Mammary epithelial cell (primary cell): ENCODE measurements at regions of chr6 and their contacts with region 1.

Region 1: GRCh38 chr6:134363318-134364039 is 45.6 kb upstream of the SGK1 start:
- DNase-seq: peak; percentile 98
- H3K4me3 ChIP-seq: no peak overlapping the region
- H3K27ac ChIP-seq: peak overlapping the region; percentile 88
- H3K4me1 ChIP-seq: peaks cover 24% of the 10 kb centered on the region
- H3K27me3 ChIP-seq: no peaks in the 10 kb centered on the region
- CTCF ChIP-seq: no peak

Region 2: GRCh38 chr6:133966654-133967329 is 396.7 kb before region 1 on chr6:
- CTCF ChIA-PET with region 1: no interaction called
- dilution Hi-C with region 1: no loop called
- in situ Hi-C with region 1: no loop called
- intact Hi-C with region 1: no loop called
- DNase-seq: no peak
- H3K4me3 ChIP-seq: no peak overlapping the region
- H3K27ac ChIP-seq: no peak overlapping the region
- H3K4me1 ChIP-seq: peaks cover 8% of the 10 kb centered on the region
- H3K27me3 ChIP-seq: no peaks in the 10 kb centered on the region
- CTCF ChIP-seq: no peak

Region 3: GRCh38 chr6:134295953-134296553 is 67.4 kb before region 1 on chr6:
- CTCF ChIA-PET with region 1: no interaction called
- dilution Hi-C with region 1: loop called (anchors 5 kb)
- in situ Hi-C with region 1: no loop called
- intact Hi-C with region 1: no loop called
- DNase-seq: peak; percentile 79
- H3K4me3 ChIP-seq: no peak overlapping the region
- H3K27ac ChIP-seq: peak overlapping the region; percentile 25
- H3K4me1 ChIP-seq: peaks cover 11% of the 10 kb centered on the region
- H3K27me3 ChIP-seq: no peaks in the 10 kb centered on the region
- CTCF ChIP-seq: no peak